Heart left ventricle (tissue), 16 donors: ENCODE measurements at regions of chr18 and their contacts with region 1.

Region 1: DNA sequence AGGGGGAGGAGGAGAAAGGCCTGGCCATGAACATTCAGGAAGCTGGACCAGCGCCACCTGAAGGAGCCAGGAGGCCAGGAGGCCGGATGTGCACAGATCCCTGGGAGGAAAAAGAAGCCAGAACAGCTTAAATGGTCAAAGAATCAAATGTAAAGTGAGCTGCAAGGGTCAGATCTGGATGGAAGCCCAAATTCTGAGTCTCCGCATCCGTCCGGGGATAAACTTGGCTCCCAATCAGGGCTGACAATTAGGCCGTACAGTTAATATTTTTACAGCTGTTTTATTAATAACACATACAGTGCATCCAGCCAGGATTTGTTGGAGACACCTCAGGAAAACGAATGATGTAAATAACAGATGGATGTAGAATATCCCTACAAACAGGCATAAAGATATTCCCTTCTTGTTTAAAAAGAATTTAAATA is 495.1 kb upstream of the TCF4 start:
- DNase-seq: peak; percentile 66 to 89 (median 77)
- ATAC-seq: peak; percentile 73 to 91 (median 80)
- H3K4me3 ChIP-seq: no peak overlapping the region
- H3K27ac ChIP-seq: peak overlapping the region in 10 of 12 donors; percentile 16 to 81 (median 68)
- H3K4me1 ChIP-seq: peaks cover 0 to 35% (median 21%) of the 10 kb centered on the region in 12 donors
- H3K27me3 ChIP-seq: no peaks in the 10 kb centered on the region
- CTCF ChIP-seq: peak in 10 of 12 donors; percentile 7 to 58 (median 29)
- POLR2A ChIP-seq: no peak

Region 2: GRCh38 chr18:55790296-55790695 is 292.8 kb before region 1 on chr18:
- intact Hi-C with region 1: loop called in 2 of 10 experiments (anchors 5 to 10 kb)
- DNase-seq: no peak
- ATAC-seq: peak in 1 of 4 donors; percentile 63
- H3K4me3 ChIP-seq: no peak overlapping the region
- H3K27ac ChIP-seq: no peak overlapping the region
- H3K4me1 ChIP-seq: peaks cover 0 to 16% (median 2%) of the 10 kb centered on the region in 12 donors
- H3K27me3 ChIP-seq: no peaks in the 10 kb centered on the region
- CTCF ChIP-seq: no peak
- POLR2A ChIP-seq: no peak

Region 3: DNA sequence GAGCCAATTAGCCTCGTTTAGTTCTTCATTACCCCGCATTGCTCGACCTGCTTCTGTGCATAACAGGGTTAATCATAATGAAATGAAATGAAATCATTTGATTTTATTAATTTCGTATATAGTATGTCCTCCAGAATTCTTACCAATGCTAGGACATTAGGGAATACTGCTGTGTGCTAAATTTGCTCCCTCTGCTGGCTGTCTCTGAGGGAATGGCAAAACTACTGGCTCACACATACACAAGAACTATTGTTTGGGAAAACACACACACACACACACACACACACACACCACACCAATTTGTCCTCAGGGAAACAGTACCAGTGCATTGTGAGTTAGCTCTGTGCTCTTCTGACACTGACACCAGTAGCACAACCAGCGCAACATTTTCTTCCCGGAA is 221.8 kb before region 1 on chr18:
- intact Hi-C with region 1: loop called in 4 of 10 experiments (anchors 5 to 10 kb)
- DNase-seq: no peak
- ATAC-seq: peak in 1 of 4 donors; percentile 24
- H3K4me3 ChIP-seq: no peak overlapping the region
- H3K27ac ChIP-seq: no peak overlapping the region
- H3K4me1 ChIP-seq: peaks cover 0 to 23% (median 6%) of the 10 kb centered on the region in 12 donors
- H3K27me3 ChIP-seq: no peaks in the 10 kb centered on the region
- CTCF ChIP-seq: peak in 9 of 12 donors; percentile 28 to 57 (median 41)
- POLR2A ChIP-seq: no peak

Region 4: GRCh38 chr18:55869556-55870501 is 213.3 kb before region 1 on chr18:
- intact Hi-C with region 1: loop called in 4 of 10 experiments (anchors 5 to 10 kb)
- DNase-seq: peak in 4 of 5 donors; percentile 35 to 46 (median 40)
- ATAC-seq: peak; percentile 68 to 88 (median 78)
- H3K4me3 ChIP-seq: no peak overlapping the region
- H3K27ac ChIP-seq: peak overlapping the region in 9 of 12 donors; percentile 3 to 77 (median 54)
- H3K4me1 ChIP-seq: peaks cover 0 to 39% (median 6%) of the 10 kb centered on the region in 12 donors
- H3K27me3 ChIP-seq: no peaks in the 10 kb centered on the region
- CTCF ChIP-seq: no peak
- POLR2A ChIP-seq: no peak

Region 5: GRCh38 chr18:55988537-55988936 is 94.6 kb before region 1 on chr18:
- intact Hi-C with region 1: loop called in 2 of 10 experiments (anchors 5 kb)
- DNase-seq: peak in 4 of 5 donors; percentile 36 to 70 (median 46)
- ATAC-seq: peak; percentile 94 to 98 (median 96)
- H3K4me3 ChIP-seq: no peak overlapping the region
- H3K27ac ChIP-seq: peak overlapping the region; percentile 11 to 90 (median 71)
- H3K4me1 ChIP-seq: peaks cover 0 to 14% (median 2%) of the 10 kb centered on the region in 12 donors
- H3K27me3 ChIP-seq: no peaks in the 10 kb centered on the region
- CTCF ChIP-seq: no peak
- POLR2A ChIP-seq: no peak

Region 6: GRCh38 chr18:56458770-56459712 is 375.9 kb after region 1 on chr18:
- intact Hi-C with region 1: loop called in 1 of 10 experiments (anchors 10 kb)
- DNase-seq: peak in 1 of 5 donors; percentile 46
- ATAC-seq: peak in 3 of 4 donors; percentile 54 to 93 (median 78)
- H3K4me3 ChIP-seq: peak overlapping the region in 3 of 12 donors; percentile 2 to 37 (median 3)
- H3K27ac ChIP-seq: peak overlapping the region in 11 of 12 donors; percentile 38 to 83 (median 58)
- H3K4me1 ChIP-seq: peaks cover 0 to 24% (median 11%) of the 10 kb centered on the region in 12 donors
- H3K27me3 ChIP-seq: no peaks in the 10 kb centered on the region
- CTCF ChIP-seq: no peak
- POLR2A ChIP-seq: no peak